Activated CD4-positive, alpha-beta memory T cell treated with anti-CD3 and anti-CD28 coated beads, Interleukin-2, amount 10 ng/mL, durations not matched to agents 7 days and 5 days (primary cell): ENCODE measurements at regions of chr6 and their contacts with region 1.

Region 1: DNA sequence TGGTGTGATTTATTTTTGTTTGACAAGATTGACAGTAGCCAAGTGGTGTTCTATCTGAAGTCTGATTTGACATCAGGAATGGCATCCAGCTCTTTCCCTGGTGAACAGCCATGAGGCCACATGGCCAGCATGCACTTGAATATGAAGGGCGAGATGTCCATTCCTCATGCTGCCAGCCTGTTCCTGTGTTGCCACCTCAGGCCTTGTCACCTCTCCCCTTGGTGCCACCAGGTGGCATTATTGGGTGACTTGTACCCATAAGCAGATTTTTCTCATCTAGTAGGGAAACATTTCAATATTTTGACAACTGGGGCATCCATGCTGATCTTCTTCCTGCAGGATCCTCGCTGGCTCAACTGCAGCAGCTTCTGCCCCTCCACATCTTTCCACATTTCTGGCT is 199.1 kb downstream of the ERMARD start:
- DNase-seq: peak; percentile 40
- H3K4me3 Mint-ChIP-seq: no peak overlapping the region
- H3K27ac Mint-ChIP-seq: no peak overlapping the region
- H3K4me1 Mint-ChIP-seq: peaks cover 4% of the 10 kb centered on the region
- H3K27me3 Mint-ChIP-seq: peaks cover 8% of the 10 kb centered on the region

Region 2: GRCh38 chr6:170516783-170517616 is 566.4 kb after region 1 on chr6:
- CTCF ChIA-PET with region 1: interaction called, 18 read pairs
- POLR2A ChIA-PET with region 1: no interaction called
- DNase-seq: peak; percentile 37
- H3K4me3 Mint-ChIP-seq: no peak overlapping the region
- H3K27ac Mint-ChIP-seq: no peak overlapping the region
- H3K4me1 Mint-ChIP-seq: peaks cover 7% of the 10 kb centered on the region
- H3K27me3 Mint-ChIP-seq: peaks cover 60% of the 10 kb centered on the region